H1 (cell line): ENCODE measurements at regions of chr5 and their contacts with region 1.

Region 1: DNA sequence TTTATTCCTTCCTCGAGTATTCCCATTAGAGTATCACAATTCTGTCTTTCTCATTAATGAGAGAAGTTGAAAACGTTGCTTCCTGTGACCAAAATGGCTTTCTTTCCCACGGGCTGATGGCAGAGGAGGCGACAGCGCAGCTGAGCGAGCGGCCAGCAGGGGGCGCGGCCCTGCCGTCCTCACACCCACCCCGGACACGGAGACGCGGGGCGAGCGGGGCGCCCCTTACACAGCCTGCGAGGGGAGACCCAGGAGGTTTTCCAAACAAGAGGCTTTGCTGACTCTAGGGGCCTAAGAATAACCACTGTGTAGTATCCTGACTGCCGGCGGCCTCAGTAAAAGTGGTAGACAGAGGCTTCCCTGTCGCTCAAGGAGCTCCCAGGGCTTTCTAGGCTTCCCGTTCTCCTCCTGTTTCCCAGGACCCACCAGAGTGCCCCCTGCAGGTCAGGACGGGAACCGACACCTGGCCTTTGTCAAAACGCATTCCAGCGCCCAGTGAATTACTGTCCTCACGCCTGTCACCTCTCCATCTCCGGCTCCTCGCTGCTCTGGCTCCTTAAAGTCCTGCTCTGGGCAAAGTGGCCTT is 27.3 kb upstream of the FGF1 start:
- DNase-seq: peak; percentile 85 to 98
- H3K4me3 ChIP-seq: peak overlapping the region; percentile 27 to 67 (median 62); a peak in 7 of 8 replicates
- H3K27ac ChIP-seq: no peak overlapping the region
- H3K4me1 ChIP-seq: peaks cover under 1 to 16% (median 6%) of the 10 kb centered on the region in 4 experiments; a peak in 6 of 7 replicates
- H3K27me3 ChIP-seq: no peaks in the 10 kb centered on the region
- CTCF ChIP-seq: peak; percentile 75 to 97 (median 89)
- EP300 ChIP-seq: 0 out of 3 replicates have a peak, but pooled peaks of 1 of the 2 experiments have one; percentile 48
- POLR2A ChIP-seq: peak in 1 of 2 experiments; percentile 63; a peak in 2 of 3 replicates
- RAD21 ChIP-seq: peak; percentile 29 to 40; a peak in 3 of 4 replicates

Region 2: GRCh38 chr5:142239394-142240159 is 473.6 kb before region 1 on chr5:
- CTCF ChIA-PET with region 1: no interaction called
- POLR2A ChIA-PET with region 1: no interaction called
- DNase-seq: no peak
- H3K4me3 ChIP-seq: no peak overlapping the region
- H3K27ac ChIP-seq: no peak overlapping the region
- H3K4me1 ChIP-seq: peaks cover 8 to 16% (median 12%) of the 10 kb centered on the region in 4 experiments
- H3K27me3 ChIP-seq: no peaks in the 10 kb centered on the region
- CTCF ChIP-seq: no peak
- EP300 ChIP-seq: no peak
- POLR2A ChIP-seq: no peak
- RAD21 ChIP-seq: no peak

Region 3: GRCh38 chr5:142644640-142645361 is 68.4 kb before region 1 on chr5:
- CTCF ChIA-PET with region 1: interaction called, 605 read pairs
- POLR2A ChIA-PET with region 1: interaction called, 3 read pairs
- DNase-seq: no peak
- H3K4me3 ChIP-seq: no peak overlapping the region
- H3K27ac ChIP-seq: no peak overlapping the region
- H3K4me1 ChIP-seq: no peaks in the 10 kb centered on the region
- H3K27me3 ChIP-seq: no peaks in the 10 kb centered on the region
- CTCF ChIP-seq: no peak
- EP300 ChIP-seq: no peak
- POLR2A ChIP-seq: no peak
- RAD21 ChIP-seq: no peak

Region 4: DNA sequence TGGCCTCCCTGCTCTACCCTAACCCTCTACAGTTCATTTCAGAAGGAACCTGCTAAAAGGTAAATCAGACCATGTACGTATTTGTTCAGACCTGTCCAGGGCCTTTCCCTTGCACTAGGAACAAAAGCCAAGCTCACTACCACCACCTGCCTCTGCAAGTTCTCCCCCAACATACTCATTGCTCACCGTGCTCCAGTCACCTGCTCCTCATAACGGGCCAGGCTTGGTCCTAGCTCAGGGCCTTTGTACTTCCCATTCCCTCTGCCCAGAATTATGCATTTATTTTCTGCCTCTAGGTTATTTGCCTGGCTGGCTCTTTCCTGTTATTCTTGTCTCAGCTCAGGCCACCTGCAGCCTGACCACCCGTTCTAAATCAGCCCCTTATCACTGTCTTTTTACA is 22.5 kb before region 1 on chr5:
- CTCF ChIA-PET with region 1: interaction called, 169 read pairs
- POLR2A ChIA-PET with region 1: no interaction called
- DNase-seq: no peak
- H3K4me3 ChIP-seq: no peak overlapping the region
- H3K27ac ChIP-seq: no peak overlapping the region
- H3K4me1 ChIP-seq: peaks cover 0 to 16% (median 8%) of the 10 kb centered on the region in 4 experiments; a peak in 6 of 7 replicates
- H3K27me3 ChIP-seq: no peaks in the 10 kb centered on the region
- CTCF ChIP-seq: no peak
- EP300 ChIP-seq: no peak
- POLR2A ChIP-seq: no peak
- RAD21 ChIP-seq: no peak

Region 5: DNA sequence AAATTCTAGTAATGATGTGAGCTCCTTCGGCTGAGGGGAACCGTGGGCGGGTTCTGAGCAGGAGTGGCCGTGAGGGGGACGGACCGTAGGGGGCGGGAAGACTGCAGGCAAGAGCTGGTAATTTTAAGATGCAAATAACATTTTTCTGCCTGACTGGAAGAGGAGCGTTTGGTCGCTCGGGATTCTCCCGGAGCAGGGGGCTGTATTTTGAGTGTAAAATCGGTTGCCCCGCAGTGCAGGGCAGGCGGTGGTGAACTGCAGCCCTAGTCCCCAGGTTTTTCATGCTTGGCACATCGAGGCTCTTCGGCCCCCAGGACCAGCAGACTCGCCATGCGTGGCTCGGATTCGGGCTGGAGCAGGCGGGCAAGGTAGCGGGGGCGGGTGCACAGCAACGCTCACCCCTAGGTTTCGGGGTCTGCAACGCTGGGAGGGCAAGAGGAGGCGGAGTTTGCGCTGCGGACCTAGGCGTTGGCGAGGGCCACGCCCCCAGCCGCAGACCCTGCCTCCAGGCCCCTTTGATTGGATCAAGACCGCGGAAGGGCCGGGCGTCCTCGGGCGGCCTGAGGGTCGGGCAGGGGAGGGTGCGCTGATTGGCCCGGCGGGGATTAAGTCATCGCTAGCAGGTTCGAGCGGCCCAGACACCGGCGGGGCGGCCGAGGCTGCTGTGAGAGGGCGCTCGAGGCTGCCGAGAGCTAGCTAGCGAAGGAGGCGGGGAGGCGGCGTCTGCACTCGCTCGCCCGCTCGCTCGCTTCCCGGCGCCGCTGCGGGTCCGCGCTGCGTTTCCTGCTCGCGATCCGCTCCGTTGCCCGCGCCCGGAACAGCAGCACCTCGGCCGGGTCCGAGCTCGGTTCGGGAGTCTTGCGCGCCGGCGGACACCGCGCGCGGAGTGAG is 56.8 kb after region 1 on chr5 and contains the start of gene ARHGAP26:
- CTCF ChIA-PET with region 1: interaction called, 15 read pairs
- POLR2A ChIA-PET with region 1: interaction called, 6 read pairs
- DNase-seq: peak; percentile 93 to 94
- H3K4me3 ChIP-seq: peak within 1 kb of the TSS; percentile 77 to 91 (median 83)
- H3K27ac ChIP-seq: no peak within 1 kb of the TSS; the same call in 1 of the 2 replicates
- H3K4me1 ChIP-seq: peaks cover 0 to 10% (median 5%) of the 10 kb centered on the region in 4 experiments; a peak in 6 of 7 replicates
- H3K27me3 ChIP-seq: peaks cover 0 to 8% (median 2%) of the 10 kb centered on the region in 4 experiments; a peak in 4 of 7 replicates
- CTCF ChIP-seq: peak in 2 of 3 experiments; percentile 16 to 17; a peak in 3 of 4 replicates
- EP300 ChIP-seq: no peak
- POLR2A ChIP-seq: peak; percentile 85 to 87
- RAD21 ChIP-seq: peak; percentile 11 to 25; a peak in 2 of 4 replicates
- total RNA-seq, gene ARHGAP26: 20.6 and 24.8 TPM in 2 replicates

Region 6: DNA sequence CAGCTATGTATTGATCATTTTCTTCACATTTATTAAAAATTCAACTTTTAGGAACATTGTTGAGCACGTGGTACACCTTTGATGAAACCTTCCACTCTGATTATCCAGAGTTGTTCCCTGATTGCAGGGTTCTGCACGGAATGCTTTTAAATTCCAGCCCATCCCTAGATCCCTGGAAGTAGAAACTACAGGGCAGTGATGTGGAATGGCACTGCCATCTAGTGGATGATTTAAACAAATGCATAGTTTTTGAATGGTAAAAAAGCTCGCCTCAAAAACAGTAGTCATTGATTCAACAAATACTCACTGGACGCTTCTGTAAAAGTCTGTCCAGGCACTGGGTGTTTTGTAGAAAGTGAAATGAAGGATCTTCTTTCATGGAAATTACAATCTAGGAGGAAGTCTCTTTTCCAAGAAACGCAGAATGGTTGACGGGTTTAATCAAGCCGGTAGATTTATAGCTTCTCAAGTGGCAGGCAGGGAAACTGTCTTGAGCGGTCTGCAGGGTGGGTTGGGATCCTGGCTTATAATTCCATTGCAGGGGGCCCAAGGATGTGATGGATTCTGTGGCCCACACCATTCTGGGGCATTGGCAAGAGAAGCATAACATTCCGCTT is 175.4 kb after region 1 on chr5:
- CTCF ChIA-PET with region 1: interaction called, 627 read pairs
- POLR2A ChIA-PET with region 1: interaction called, 5 read pairs
- DNase-seq: no peak
- H3K4me3 ChIP-seq: no peak overlapping the region
- H3K27ac ChIP-seq: no peak overlapping the region
- H3K4me1 ChIP-seq: peaks cover 0 to 11% (median 0%) of the 10 kb centered on the region in 4 experiments; a peak in 1 of 7 replicates
- H3K27me3 ChIP-seq: no peaks in the 10 kb centered on the region
- CTCF ChIP-seq: peak in 2 of 3 experiments; percentile 61 to 69; a peak in 2 of 4 replicates
- EP300 ChIP-seq: no peak
- POLR2A ChIP-seq: no peak
- RAD21 ChIP-seq: peak; percentile 89 to 91

Region 7: GRCh38 chr5:142922223-142922952 is 209.2 kb after region 1 on chr5:
- CTCF ChIA-PET with region 1: interaction called, 118 read pairs
- POLR2A ChIA-PET with region 1: interaction called, 3 read pairs
- DNase-seq: no peak
- H3K4me3 ChIP-seq: no peak overlapping the region
- H3K27ac ChIP-seq: no peak overlapping the region
- H3K4me1 ChIP-seq: no peaks in the 10 kb centered on the region
- H3K27me3 ChIP-seq: no peaks in the 10 kb centered on the region
- CTCF ChIP-seq: peak in 1 of 3 experiments; percentile 29; a peak in 2 of 4 replicates
- EP300 ChIP-seq: no peak
- POLR2A ChIP-seq: no peak
- RAD21 ChIP-seq: peak in 1 of 2 experiments; percentile 42; a peak in 2 of 4 replicates